Mucosa of descending colon (tissue), 3 donors: ENCODE measurements at regions of chr22 and their contacts with region 1.

Region 1: GRCh38 chr22:22884888-22885840 is 2.5 kb upstream of the IGLL5 start:
- DNase-seq: peak in 2 of 3 donors; percentile 37 to 73
- ATAC-seq: peak; percentile 52
- H3K4me3 ChIP-seq: no peak overlapping the region
- H3K4me1 ChIP-seq: no peaks in the 10 kb centered on the region
- CTCF ChIP-seq: no peak

Region 2: GRCh38 chr22:22702237-22703202 is 182.6 kb before region 1 on chr22:
- intact Hi-C with region 1: no loop called
- DNase-seq: peak in 2 of 3 donors; percentile 45 to 52
- ATAC-seq: peak; percentile 73
- H3K4me3 ChIP-seq: no peak overlapping the region
- H3K4me1 ChIP-seq: no peaks in the 10 kb centered on the region
- CTCF ChIP-seq: peak; percentile 10

Region 3: GRCh38 chr22:22848364-22848866 is 36.7 kb before region 1 on chr22:
- intact Hi-C with region 1: loop called in 1 of 2 experiments (anchors 5 kb)
- DNase-seq: peak; percentile 65 to 87 (median 81)
- ATAC-seq: peak; percentile 94
- H3K4me3 ChIP-seq: no peak overlapping the region
- H3K4me1 ChIP-seq: no peaks in the 10 kb centered on the region
- CTCF ChIP-seq: peak; percentile 90

Region 4: GRCh38 chr22:23012081-23012622 is 127.0 kb after region 1 on chr22:
- intact Hi-C with region 1: loop called in 1 of 2 experiments (anchors 5 kb)
- DNase-seq: no peak
- ATAC-seq: no peak
- H3K4me3 ChIP-seq: no peak overlapping the region
- H3K4me1 ChIP-seq: no peaks in the 10 kb centered on the region
- CTCF ChIP-seq: no peak